ENCODE measurements at regions of chr2 and their contacts with region 1.

Region 1: DNA sequence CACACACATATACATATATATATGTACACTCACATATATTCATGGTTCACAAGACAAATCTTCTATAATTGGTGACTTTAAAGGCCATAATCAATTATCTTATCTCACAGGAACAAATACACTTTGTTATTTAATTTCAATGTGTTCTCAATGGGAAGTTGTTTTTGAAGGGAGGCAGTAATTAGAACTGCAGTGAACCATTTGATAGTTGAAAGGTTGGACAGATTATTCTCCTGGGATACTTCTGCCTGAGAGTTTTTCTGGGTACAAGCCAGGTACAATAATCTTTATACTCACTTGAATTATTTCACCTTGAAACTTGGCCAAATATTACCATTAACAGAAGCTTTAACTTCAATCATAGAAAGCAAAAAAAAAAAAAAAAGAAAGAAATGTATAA is 546.6 kb upstream of the LRRTM4 start:
- DNase-seq: no peak
- H3K4me3 ChIP-seq: no peak overlapping the region
- H3K27ac ChIP-seq: peak overlapping the region; percentile 60
- H3K4me1 ChIP-seq: peaks cover 76% of the 10 kb centered on the region
- H3K27me3 ChIP-seq: no peaks in the 10 kb centered on the region
- CTCF ChIP-seq: no peak

Region 2: GRCh38 chr2:78861546-78861945 is 792.7 kb after region 1 on chr2:
- CTCF ChIA-PET with region 1: no interaction called
- POLR2A ChIA-PET with region 1: no interaction called
- intact Hi-C with region 1: loop called (anchors 5 kb)
- DNase-seq: peak; percentile 68
- H3K4me3 ChIP-seq: no peak overlapping the region
- H3K27ac ChIP-seq: no peak overlapping the region
- H3K4me1 ChIP-seq: no peaks in the 10 kb centered on the region
- H3K27me3 ChIP-seq: no peaks in the 10 kb centered on the region
- CTCF ChIP-seq: peak; percentile 62

Region 3: GRCh38 chr2:78999406-78999805 is 930.6 kb after region 1 on chr2:
- CTCF ChIA-PET with region 1: interaction called, 6 read pairs
- POLR2A ChIA-PET with region 1: interaction called, 4 read pairs
- intact Hi-C with region 1: loop called (anchors 5 kb)
- DNase-seq: peak; percentile 43
- H3K4me3 ChIP-seq: no peak overlapping the region
- H3K27ac ChIP-seq: peak overlapping the region; percentile 0
- H3K4me1 ChIP-seq: no peaks in the 10 kb centered on the region
- H3K27me3 ChIP-seq: no peaks in the 10 kb centered on the region
- CTCF ChIP-seq: peak; percentile 64